Tibial artery (tissue), 4 donors: ENCODE measurements at regions of chr4 and their contacts with region 1.

Region 1: GRCh38 chr4:184544788-184545409 is 70.5 kb upstream of the IRF2 start:
- DNase-seq: no peak
- H3K4me3 ChIP-seq: no peak overlapping the region
- H3K27ac ChIP-seq: no peak overlapping the region
- H3K4me1 ChIP-seq: no peaks in the 10 kb centered on the region
- H3K27me3 ChIP-seq: peaks cover 0 to 13% of the 10 kb centered on the region in 2 donors
- CTCF ChIP-seq: no peak

Region 2: DNA sequence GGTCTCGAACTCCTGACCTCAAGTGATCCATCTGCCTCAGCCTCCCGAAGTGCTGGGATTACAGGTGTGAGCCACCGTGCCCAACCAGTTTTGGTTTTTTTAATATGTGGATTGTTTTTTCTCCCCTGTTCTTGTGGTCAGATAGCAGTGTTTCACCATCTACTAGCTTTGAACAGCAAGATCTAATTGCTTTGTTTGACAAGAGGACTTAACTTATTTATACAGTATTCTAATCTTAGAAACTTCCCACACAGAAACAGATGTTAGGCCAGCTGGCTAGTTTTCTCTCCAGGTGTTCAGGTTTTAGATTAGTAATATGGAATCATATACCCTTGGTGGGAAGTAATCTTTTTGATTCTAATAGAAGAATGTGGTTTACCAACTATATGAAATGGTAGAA is 1027.1 kb before region 1 on chr4:
- intact Hi-C with region 1: loop called (anchors 5 kb)
- DNase-seq: no peak
- H3K4me3 ChIP-seq: no peak overlapping the region
- H3K27ac ChIP-seq: no peak overlapping the region
- H3K4me1 ChIP-seq: no peaks in the 10 kb centered on the region
- H3K27me3 ChIP-seq: no peaks in the 10 kb centered on the region
- CTCF ChIP-seq: no peak

Region 3: GRCh38 chr4:184100297-184100885 is 444.5 kb before region 1 on chr4:
- intact Hi-C with region 1: no loop called
- DNase-seq: no peak
- H3K4me3 ChIP-seq: no peak overlapping the region
- H3K27ac ChIP-seq: no peak overlapping the region
- H3K4me1 ChIP-seq: peaks cover 0 to 23% (median 1%) of the 10 kb centered on the region in 4 donors
- H3K27me3 ChIP-seq: no peaks in the 10 kb centered on the region
- CTCF ChIP-seq: peak; percentile 20 to 26

Region 4: GRCh38 chr4:184273166-184274147 is 271.4 kb before region 1 on chr4:
- intact Hi-C with region 1: loop called (anchors 5 kb)
- DNase-seq: no peak
- H3K4me3 ChIP-seq: no peak overlapping the region
- H3K27ac ChIP-seq: no peak overlapping the region
- H3K4me1 ChIP-seq: no peaks in the 10 kb centered on the region
- H3K27me3 ChIP-seq: no peaks in the 10 kb centered on the region
- CTCF ChIP-seq: no peak

Region 5: DNA sequence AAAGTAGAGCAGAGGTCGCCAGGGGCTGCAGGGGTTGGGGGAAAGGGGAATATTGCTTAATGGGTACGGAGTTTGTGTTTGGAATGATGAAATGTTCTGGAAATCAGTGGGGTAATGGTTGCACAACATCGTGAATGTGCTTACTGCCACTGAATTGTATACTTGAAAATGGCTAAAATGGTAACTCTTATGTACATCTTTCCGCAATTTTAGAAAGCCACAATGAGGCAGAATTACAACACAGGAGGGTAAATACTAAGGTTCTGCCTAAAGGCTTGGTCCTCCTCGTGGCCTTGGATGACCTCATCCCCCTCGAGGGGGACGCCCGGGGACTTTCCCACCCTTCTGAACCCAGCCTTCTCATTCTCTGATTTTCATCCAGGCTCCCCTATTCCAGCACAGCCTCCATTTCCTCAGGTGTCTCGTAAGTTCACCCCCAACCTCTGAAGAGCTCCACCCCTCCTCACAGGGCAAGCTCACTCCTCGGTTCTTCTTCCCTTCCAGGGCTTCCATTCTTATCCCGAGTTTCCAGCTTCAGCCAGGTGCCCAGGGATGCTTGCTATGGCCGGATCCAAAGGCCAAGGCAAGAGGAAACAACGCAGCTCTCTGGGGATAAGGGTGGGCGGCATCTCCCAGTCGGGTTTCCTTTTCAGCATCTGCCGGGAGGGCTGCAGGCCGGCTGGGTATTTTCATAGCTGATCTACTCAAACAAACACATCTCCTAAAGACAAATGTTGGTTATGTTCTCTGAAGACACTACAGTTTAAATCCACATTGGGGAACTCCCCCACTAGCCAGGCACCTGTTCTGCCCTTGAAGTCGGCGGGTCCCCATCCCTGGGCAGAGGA is 352.2 kb after region 1 on chr4:
- intact Hi-C with region 1: no loop called
- DNase-seq: no peak
- H3K4me3 ChIP-seq: no peak overlapping the region
- H3K27ac ChIP-seq: no peak overlapping the region
- H3K4me1 ChIP-seq: no peaks in the 10 kb centered on the region
- H3K27me3 ChIP-seq: no peaks in the 10 kb centered on the region
- CTCF ChIP-seq: no peak